Posterior vena cava (tissue), 2 donors: ENCODE measurements at regions of chr14 and their contacts with region 1.

Region 1: GRCh38 chr14:73825551-73826188 is 26.0 kb upstream of the PTGR2 start:
- DNase-seq: peak; percentile 98

Region 2: DNA sequence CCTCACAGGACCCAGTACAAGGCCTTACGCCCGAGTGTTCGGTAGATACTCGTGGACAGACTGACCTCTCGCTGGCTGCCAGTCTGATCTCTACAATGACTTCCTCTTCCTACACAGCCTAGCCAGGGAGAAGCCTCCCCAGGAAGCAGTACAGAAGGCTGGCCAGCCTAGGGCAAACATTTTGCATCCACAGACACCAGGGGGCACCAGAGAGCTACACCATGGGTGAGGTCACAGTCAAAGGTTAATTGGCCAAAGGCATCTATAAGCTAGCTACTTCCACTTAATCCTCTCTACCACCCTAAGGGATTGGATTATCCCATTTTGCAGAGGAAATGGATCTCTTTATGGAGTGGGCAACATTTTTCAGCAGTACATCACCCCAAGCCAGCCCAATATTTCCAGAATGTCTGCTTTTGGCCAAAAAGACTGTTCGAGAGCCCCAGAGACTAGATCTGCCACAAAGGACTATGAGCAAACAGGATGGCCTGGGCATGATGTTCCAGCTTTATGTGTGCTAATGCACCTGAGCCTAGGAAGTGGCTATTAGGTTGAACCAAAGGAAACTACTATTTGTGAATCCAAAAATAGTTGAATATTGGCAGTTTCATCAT is 96.8 kb before region 1 on chr14:
- intact Hi-C with region 1: loop called (anchors 5 to 10 kb)
- DNase-seq: peak; percentile 95

Region 3: DNA sequence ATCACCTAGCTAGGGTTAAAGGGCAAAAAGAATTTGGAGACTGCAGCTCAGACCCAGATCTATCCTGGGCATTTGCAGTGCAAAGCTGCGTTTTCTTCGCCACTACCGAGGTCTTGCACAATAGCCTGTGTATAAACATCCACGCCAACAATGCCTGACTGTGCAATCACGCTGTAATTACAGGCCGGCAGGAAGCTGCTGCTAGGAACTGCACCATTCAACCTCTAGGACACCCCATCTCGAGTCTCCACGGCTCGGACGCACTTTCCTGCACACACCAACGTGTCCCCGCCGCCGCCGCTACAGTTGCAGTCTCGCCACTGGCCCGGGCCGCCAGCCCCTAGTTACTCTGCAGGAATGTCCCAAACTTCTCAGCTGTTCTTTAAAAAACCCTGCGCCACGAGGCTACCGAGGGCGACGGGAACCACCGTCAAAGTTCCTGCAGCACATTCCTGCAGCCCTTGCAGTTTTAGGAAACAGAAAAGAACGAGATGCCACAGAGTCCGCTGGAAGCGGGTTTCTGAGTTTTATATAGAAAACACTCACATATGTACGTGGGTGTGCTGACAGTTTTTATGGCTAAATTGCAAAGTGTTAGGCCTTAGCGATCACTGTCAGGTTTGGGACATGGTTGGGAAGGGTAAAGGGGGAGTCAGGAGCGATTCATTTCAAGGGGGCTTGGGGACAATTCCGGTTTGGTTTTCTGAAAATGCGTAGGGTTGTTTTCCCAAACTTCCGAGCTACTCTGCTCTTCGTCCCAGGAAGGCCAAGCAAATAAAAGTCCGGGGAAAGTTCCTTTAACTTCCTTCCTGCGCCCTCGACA is 39.6 kb before region 1 on chr14:
- intact Hi-C with region 1: loop called in 1 of 2 experiments (anchors 2 kb)
- DNase-seq: peak; percentile 93

Region 4: GRCh38 chr14:73886449-73887317 is 61.0 kb after region 1 on chr14 and contains the start of gene ZNF410:
- intact Hi-C with region 1: no loop called
- DNase-seq: peak; percentile 99
- total RNA-seq, gene ZNF410: 38.6 to 39.2 TPM